WTC11 (cell line): ENCODE measurements at regions of chr17 and their contacts with region 1.

Region 1: DNA sequence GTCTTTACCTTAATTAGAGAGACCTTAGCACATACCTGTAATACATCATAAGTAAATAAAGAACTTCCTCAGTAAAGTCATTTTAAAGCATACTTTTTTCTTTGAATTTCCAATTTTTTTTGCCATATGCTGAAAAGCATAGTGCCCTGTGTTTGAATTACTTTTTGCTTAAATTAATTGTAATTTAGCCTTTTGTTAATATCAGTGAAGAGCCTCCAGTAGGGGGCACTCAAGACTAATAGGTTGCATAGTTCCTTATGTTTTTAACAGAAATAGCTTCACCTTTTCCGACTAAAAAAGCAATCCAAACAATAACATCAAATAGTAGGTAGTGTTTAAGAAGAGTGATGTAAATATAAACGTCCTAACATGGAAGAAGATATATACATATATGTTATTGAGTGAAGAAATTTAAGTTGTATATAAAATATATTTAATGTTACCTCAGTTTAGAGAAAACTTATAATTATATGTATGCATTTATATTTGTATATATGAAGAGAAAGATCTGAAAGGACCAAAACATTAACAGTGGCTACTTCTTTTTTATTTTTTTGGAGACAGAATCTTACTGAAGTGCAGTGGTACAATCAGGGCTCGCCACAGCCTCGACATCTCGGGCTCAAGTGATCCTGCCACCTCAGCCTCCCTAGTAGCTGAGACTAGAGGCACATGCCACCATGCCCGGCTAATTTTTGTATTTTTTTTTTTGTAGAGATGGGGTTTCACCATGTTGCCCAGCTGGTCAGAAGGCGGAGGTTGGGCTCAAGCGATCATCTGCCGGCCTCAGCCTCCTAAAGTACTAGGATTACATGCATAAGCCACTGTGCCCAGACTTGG is 18.8 kb downstream of the RAD51C start:
- DNase-seq: peak; percentile 16
- ATAC-seq: no peak
- H3K4me3 Mint-ChIP-seq: no peak overlapping the region
- H3K27ac Mint-ChIP-seq: no peak overlapping the region
- H3K4me1 Mint-ChIP-seq: no peaks in the 10 kb centered on the region
- H3K27me3 Mint-ChIP-seq: no peaks in the 10 kb centered on the region
- CTCF ChIP-seq: peak; percentile 79

Region 2: GRCh38 chr17:58615768-58616659 is 95.1 kb before region 1 on chr17:
- CTCF ChIA-PET with region 1: no interaction called
- POLR2A ChIA-PET with region 1: no interaction called
- DNase-seq: no peak
- ATAC-seq: no peak
- H3K4me3 Mint-ChIP-seq: no peak overlapping the region
- H3K27ac Mint-ChIP-seq: no peak overlapping the region
- H3K4me1 Mint-ChIP-seq: peaks cover 9% of the 10 kb centered on the region
- H3K27me3 Mint-ChIP-seq: no peaks in the 10 kb centered on the region
- CTCF ChIP-seq: no peak

Region 3: GRCh38 chr17:58755577-58756245 is 44.6 kb after region 1 on chr17 and contains the start of gene PPM1E:
- CTCF ChIA-PET with region 1: interaction called, 10 read pairs
- POLR2A ChIA-PET with region 1: no interaction called
- DNase-seq: peak; percentile 92
- ATAC-seq: peak; percentile 93
- H3K4me3 Mint-ChIP-seq: peak within 1 kb of the TSS; percentile 99
- H3K27ac Mint-ChIP-seq: no peak within 1 kb of the TSS
- H3K4me1 Mint-ChIP-seq: peaks cover 8% of the 10 kb centered on the region
- H3K27me3 Mint-ChIP-seq: peaks cover 43% of the 10 kb centered on the region
- CTCF ChIP-seq: no peak
- total RNA-seq, gene PPM1E: 8.1 to 8.4 TPM (median 8.2 TPM) in 3 replicates

Region 4: GRCh38 chr17:59004338-59005111 is 293.4 kb after region 1 on chr17:
- CTCF ChIA-PET with region 1: interaction called, 39 read pairs
- POLR2A ChIA-PET with region 1: no interaction called
- DNase-seq: peak; percentile 78
- ATAC-seq: peak; percentile 80
- H3K4me3 Mint-ChIP-seq: no peak overlapping the region
- H3K27ac Mint-ChIP-seq: peak overlapping the region; percentile 48; the same call in 1 of the 2 replicates
- H3K4me1 Mint-ChIP-seq: peaks cover 6% of the 10 kb centered on the region
- H3K27me3 Mint-ChIP-seq: no peaks in the 10 kb centered on the region
- CTCF ChIP-seq: peak; percentile 83